Activated CD4-positive, alpha-beta T cell treated with anti-CD3 and anti-CD28 coated beads for 36 hours (primary cell): ENCODE measurements at regions of chr19 and their contacts with region 1.

Region 1: GRCh38 chr19:20167020-20167644 is at the start of gene ZNF486:
- DNase-seq: peak; percentile 97
- ATAC-seq: peak; percentile 99
- H3K4me3 Mint-ChIP-seq: peak within 1 kb of the TSS; percentile 99
- H3K27ac Mint-ChIP-seq: peak within 1 kb of the TSS; percentile 97
- H3K4me1 Mint-ChIP-seq: peaks cover 34% of the 10 kb centered on the region
- H3K27me3 Mint-ChIP-seq: no peaks in the 10 kb centered on the region
- total RNA-seq, gene ZNF486: 16.1 to 18.1 TPM

Region 2: DNA sequence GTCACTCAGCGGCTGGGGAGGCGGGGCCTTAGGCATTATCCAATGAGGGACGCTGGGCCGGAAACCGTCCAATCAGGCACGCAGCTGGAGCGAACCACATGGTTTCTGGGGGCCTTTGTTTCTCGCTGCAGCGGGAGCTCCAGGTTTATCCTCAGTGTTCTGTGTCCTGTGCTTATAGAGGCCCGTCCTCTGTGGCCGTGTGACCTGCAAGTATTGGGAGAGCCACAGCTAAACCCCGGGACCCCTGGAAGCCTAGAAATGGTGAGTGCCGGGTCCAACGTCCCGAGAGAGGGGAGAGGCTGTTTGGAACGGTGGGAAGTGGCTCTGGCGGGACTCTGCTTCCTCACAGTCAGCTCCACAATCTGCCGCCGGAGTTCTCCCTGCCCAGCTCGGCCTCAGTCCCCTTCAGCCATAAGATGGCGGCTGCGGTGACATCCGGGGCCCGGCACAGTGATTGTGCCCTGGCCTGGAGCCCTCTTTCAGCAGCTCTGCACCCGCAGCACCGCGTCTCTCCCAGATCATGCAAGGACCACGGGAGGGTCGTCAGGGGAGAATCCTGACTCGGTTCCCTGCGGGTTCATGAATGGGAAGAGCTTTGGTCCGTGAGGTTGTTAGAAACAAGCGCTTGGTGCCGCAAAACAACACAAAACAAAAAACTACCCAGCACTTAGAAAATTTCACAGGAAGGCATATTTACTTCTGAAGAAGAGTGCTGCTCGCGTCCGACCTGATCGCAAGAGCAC is 301.2 kb before region 1 on chr19 and contains the start of gene ZNF253:
- CTCF ChIA-PET with region 1: no interaction called
- POLR2A ChIA-PET with region 1: interaction called, 7 read pairs
- intact Hi-C with region 1: loop called in 1 of 2 experiments (anchors 1 kb)
- DNase-seq: peak; percentile 98
- ATAC-seq: peak; percentile 93
- H3K4me3 Mint-ChIP-seq: peak within 1 kb of the TSS; percentile 88
- H3K27ac Mint-ChIP-seq: peak within 1 kb of the TSS; percentile 98
- H3K4me1 Mint-ChIP-seq: peaks cover 21% of the 10 kb centered on the region
- H3K27me3 Mint-ChIP-seq: no peaks in the 10 kb centered on the region
- total RNA-seq, gene ZNF253: 16.1 to 25.1 TPM

Region 3: DNA sequence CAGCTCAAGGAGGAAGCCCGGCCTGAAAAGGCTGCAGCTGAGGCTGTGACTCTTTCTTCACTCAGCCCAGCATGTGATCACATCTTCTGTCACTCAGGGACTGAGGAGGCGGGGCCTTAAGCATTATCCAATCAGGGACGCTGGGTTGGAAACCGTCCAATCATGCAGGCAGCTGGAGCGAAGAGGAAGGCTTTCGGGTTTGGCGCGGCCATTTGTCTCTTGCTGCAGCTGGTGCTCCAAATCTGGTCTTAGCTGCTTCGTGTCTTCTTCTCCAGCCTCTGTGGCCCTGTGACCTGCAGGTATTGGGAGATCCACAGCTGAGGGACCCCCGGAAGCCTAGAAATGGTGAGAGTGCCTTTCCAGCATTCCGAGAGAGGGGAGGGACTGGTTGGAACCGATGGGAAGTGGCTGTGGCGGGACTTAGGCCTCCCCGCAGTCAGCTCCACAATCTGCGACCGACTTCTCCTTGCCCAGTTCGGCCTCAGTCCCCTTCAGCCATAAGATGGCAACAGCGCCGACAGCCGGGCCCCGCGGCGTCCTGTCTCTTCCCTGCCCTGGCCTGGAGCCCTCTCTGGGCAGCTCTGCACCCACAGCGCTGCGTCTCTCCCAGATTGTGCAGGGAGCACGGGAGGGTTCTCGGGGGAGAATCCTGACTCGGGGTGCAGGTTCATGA is 89.2 kb before region 1 on chr19 and contains the start of gene ZNF90:
- CTCF ChIA-PET with region 1: no interaction called
- POLR2A ChIA-PET with region 1: interaction called, 4 read pairs
- intact Hi-C with region 1: loop called in 1 of 2 experiments (anchors 2 kb)
- DNase-seq: peak; percentile 96
- ATAC-seq: peak; percentile 100
- H3K4me3 Mint-ChIP-seq: peak within 1 kb of the TSS; percentile 97
- H3K27ac Mint-ChIP-seq: peak within 1 kb of the TSS; percentile 73
- H3K4me1 Mint-ChIP-seq: peaks cover 11% of the 10 kb centered on the region
- H3K27me3 Mint-ChIP-seq: no peaks in the 10 kb centered on the region
- total RNA-seq, gene ZNF90: 21.6 to 22.9 TPM

Region 4: DNA sequence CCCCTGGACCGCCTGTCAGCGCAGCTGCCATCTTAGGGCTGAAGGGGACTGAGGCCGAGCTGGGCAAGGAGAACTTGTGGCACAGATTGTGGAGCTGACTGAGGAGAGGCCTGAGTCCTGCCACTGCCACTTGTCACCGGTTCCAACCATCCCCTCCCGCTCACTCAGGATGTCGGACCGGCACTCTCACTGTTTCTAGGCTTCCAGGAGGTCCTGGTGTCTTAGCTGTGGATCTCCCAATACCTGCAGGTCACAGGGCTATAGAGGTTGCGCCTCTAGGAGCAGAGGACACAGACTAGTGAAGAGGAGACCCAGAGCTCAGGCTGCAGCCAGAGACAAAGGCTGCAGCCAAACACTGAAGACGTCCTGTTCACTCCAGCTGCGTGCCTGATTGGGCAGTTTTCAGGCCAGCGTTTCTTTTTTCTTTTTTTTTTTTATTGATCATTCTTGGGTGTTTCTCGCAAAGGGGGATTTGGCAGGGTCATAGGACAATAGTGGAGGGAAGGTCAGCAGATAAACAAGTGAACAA is 15.5 kb before region 1 on chr19:
- CTCF ChIA-PET with region 1: no interaction called
- POLR2A ChIA-PET with region 1: no interaction called
- intact Hi-C with region 1: no loop called
- DNase-seq: no peak
- ATAC-seq: no peak
- H3K4me3 Mint-ChIP-seq: no peak overlapping the region
- H3K27ac Mint-ChIP-seq: no peak overlapping the region
- H3K4me1 Mint-ChIP-seq: no peaks in the 10 kb centered on the region
- H3K27me3 Mint-ChIP-seq: no peaks in the 10 kb centered on the region

Region 5: GRCh38 chr19:20423381-20424197 is 256.5 kb after region 1 on chr19:
- CTCF ChIA-PET with region 1: no interaction called
- POLR2A ChIA-PET with region 1: interaction called, 5 read pairs
- intact Hi-C with region 1: loop called in 1 of 2 experiments (anchors 2 kb)
- DNase-seq: peak; percentile 61
- ATAC-seq: no peak
- H3K4me3 Mint-ChIP-seq: peak overlapping the region; percentile 96
- H3K27ac Mint-ChIP-seq: peak overlapping the region; percentile 99
- H3K4me1 Mint-ChIP-seq: peaks cover 9% of the 10 kb centered on the region
- H3K27me3 Mint-ChIP-seq: no peaks in the 10 kb centered on the region